Ovary (tissue), 10 donors: ENCODE measurements at regions of chr7 and their contacts with region 1.

Region 1: GRCh38 chr7:4744391-4745264 is 30.8 kb upstream of the AP5Z1 start:
- DNase-seq: peak; percentile 95 to 99 (median 97)
- H3K4me3 ChIP-seq: peak overlapping the region; percentile 25
- H3K27ac ChIP-seq: peak overlapping the region in 1 of 2 donors; percentile 80
- H3K4me1 ChIP-seq: peaks cover 16% of the 10 kb centered on the region
- H3K27me3 ChIP-seq: no peaks in the 10 kb centered on the region
- CTCF ChIP-seq: no peak
- EP300 ChIP-seq: no peak
- POLR2A ChIP-seq: no peak

Region 2: DNA sequence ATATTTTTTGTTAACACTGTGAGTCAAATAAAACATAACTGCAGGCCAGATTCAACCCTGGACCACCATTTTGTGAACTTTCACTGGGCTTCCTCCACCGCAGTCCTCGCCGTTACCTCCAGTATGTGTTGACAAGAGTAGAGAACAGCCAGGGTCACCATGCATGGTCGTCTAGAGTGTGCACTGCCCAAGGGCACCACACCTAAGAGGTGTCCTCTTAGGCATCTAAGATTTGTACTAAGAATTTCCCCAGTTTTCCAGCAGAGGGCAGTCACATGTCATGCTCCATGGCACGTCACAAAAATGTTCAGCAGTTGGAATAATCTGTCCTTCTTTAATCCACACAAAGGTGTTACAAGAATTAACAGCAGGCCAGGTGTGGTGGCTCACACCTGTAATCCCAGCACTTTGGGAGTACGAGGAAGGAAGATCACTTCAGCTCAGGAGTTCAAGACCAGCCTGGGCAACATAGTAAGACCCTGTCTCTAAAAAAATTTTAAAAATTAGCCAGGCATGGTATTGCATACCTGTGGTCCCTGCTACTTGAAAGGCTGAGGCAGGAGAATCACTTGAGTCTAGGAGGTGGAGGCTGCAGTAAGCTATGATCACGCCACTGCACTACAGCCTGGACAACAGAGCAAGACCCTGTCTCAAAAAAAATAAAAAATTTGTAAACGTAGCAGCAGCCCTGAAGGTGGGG is 133.7 kb before region 1 on chr7:
- intact Hi-C with region 1: loop called in 1 of 4 experiments (anchors 5 kb)
- DNase-seq: peak; percentile 23 to 67 (median 42)
- H3K4me3 ChIP-seq: no peak overlapping the region
- H3K27ac ChIP-seq: no peak overlapping the region
- H3K4me1 ChIP-seq: peaks cover 1% of the 10 kb centered on the region
- H3K27me3 ChIP-seq: no peaks in the 10 kb centered on the region
- CTCF ChIP-seq: peak; percentile 70 to 81 (median 76)
- EP300 ChIP-seq: no peak
- POLR2A ChIP-seq: no peak

Region 3: DNA sequence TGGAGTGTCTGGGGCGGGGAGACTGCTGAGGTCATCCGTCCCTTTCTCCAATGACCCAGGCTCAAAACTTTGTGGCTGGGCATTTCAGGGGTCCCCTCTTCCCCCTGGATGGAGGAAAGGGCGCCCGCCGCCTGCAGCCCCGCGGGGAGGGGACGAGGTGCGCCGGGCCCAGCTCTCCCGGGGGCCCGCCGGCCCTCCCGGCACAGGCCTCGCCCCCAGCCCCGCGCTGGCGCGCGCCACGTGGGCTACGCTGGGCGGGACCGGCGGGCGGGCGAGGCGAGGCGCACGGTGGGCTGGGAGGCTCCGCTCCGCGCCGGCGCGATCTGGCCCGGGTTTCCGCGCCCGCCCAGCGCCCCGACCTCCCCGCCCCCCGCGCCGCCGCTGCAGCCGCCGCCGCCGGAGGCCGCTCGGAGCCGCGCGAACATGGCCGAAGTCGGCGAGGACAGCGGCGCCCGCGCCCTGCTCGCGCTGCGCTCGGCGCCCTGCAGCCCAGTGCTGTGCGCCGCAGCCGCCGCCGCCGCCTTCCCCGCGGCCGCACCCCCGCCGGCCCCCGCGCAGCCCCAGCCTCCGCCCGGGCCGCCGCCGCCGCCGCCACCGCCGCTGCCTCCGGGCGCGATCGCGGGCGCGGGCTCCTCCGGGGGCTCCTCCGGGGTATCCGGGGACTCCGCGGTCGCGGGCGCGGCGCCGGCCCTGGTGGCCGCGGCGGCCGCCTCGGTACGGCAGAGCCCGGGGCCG is 62.6 kb before region 1 on chr7 and contains the start of gene FOXK1:
- intact Hi-C with region 1: loop called (anchors 2 to 10 kb)
- DNase-seq: peak; percentile 73 to 88 (median 82)
- H3K4me3 ChIP-seq: peak within 1 kb of the TSS; percentile 81
- H3K27ac ChIP-seq: peak within 1 kb of the TSS; percentile 67 to 89
- H3K4me1 ChIP-seq: peaks cover 5% of the 10 kb centered on the region
- H3K27me3 ChIP-seq: no peaks in the 10 kb centered on the region
- CTCF ChIP-seq: no peak
- EP300 ChIP-seq: no peak
- POLR2A ChIP-seq: peak; percentile 32
- total RNA-seq, gene FOXK1: 10.9 to 43.9 (median 32.6) TPM

Region 4: DNA sequence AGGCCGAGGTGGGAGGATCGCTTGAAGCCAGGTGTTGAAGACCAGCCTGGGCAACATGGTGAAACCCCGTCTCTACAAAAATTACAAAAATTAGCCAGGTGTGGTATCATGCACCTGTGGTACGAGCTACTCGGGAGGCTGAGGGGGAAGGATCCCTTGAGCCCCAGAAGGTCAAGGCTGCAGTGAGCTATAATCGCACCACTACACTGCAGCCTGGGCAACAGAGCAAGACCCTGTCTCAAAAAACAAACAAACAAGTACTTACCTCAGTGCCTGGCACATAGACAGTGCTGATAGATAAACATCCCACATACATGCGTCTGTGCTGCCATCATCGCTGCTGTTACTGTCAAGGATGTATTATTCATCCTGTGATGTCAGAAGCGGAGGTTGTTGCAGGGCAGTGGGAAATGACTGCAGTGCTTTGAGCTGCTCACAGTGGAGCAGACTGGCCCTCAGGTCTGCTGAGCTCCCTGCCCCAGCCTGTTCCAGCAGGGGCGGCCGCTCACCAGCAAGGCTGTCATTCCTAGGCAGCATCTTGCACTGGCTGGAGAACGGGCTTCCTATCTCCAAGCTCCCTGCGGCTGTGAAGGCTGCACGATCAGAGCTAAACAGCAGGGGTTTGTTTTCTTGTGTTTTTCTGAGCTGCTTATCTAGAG is 43.9 kb before region 1 on chr7:
- intact Hi-C with region 1: loop called in 1 of 4 experiments (anchors 5 kb)
- DNase-seq: no peak
- H3K4me3 ChIP-seq: no peak overlapping the region
- H3K27ac ChIP-seq: no peak overlapping the region
- H3K4me1 ChIP-seq: peaks cover 13% of the 10 kb centered on the region
- H3K27me3 ChIP-seq: no peaks in the 10 kb centered on the region
- CTCF ChIP-seq: no peak
- EP300 ChIP-seq: no peak
- POLR2A ChIP-seq: no peak